Panc1 (cell line): ENCODE measurements at regions of chr10 and their contacts with region 1.

Region 1: DNA sequence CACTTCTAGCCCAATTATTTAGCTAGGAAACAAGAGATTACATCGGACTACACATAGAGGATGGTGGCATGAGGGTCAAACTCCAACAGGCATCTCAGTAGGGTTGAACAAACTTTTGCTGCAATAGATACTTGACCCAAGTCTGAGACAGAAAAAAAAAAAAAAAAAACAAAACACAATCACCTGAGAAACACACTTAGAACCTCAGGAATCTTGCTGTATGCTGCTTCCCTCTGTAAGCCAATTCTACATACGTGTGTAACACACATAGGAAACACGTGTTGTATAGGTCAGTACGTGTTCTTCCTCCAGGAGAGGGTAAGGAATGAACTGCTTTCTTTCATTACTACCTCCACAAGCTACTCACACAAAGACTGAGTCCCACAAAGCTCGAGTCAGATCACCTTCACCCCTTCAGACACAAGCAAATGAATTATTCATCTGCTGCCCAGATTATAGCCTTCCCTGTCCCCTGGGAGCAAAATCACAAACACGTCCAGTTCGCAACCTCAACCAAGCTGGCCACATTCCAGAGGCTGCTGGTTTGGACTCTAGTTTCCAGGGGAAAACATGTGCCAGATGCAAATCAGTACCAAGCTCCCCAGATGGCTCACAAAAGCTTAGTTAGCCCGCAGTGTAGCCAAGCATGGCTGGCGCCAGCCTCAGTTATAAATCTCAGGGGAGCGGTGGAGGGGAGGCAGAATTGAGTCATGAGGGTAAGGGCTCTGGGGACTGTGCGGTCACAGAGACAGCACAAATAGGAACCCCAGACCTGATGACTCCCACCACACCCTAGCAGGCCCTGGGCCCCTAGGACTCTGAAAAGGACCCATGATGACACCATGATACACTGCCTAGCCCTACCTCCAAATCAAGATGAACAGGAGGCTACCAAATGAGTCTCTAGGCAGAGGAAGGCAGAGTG is 15.1 kb downstream of the PSAP start:
- DNase-seq: no peak
- ATAC-seq: peak; percentile 1; the same call in 1 of the 2 replicates
- H3K4me3 ChIP-seq: peak overlapping the region in 1 of 2 experiments; percentile 2; a peak in 1 of 4 replicates
- H3K27ac ChIP-seq: peak overlapping the region; percentile 92
- H3K4me1 ChIP-seq: peaks cover 82% of the 10 kb centered on the region
- H3K27me3 ChIP-seq: no peaks in the 10 kb centered on the region
- CTCF ChIP-seq: no peak

Region 2: GRCh38 chr10:71812016-71812912 is 23.7 kb before region 1 on chr10:
- CTCF ChIA-PET with region 1: interaction called, 10 read pairs
- POLR2A ChIA-PET with region 1: no interaction called
- in situ Hi-C with region 1: no loop called
- intact Hi-C with region 1: no loop called
- DNase-seq: no peak
- ATAC-seq: peak; percentile 72
- H3K4me3 ChIP-seq: no peak overlapping the region
- H3K27ac ChIP-seq: peak overlapping the region; percentile 14; the same call in 1 of the 2 replicates
- H3K4me1 ChIP-seq: peaks cover 49% of the 10 kb centered on the region
- H3K27me3 ChIP-seq: no peaks in the 10 kb centered on the region
- CTCF ChIP-seq: peak; percentile 91; the same call in 1 of the 2 replicates

Region 3: GRCh38 chr10:71850637-71851464 is 14.9 kb after region 1 on chr10 and contains the start of gene PSAP:
- CTCF ChIA-PET with region 1: interaction called, 4 read pairs
- POLR2A ChIA-PET with region 1: interaction called, 33 read pairs
- in situ Hi-C with region 1: no loop called
- intact Hi-C with region 1: no loop called
- DNase-seq: peak; percentile 95
- ATAC-seq: peak; percentile 95
- H3K4me3 ChIP-seq: peak within 1 kb of the TSS; percentile 78 to 86
- H3K27ac ChIP-seq: peak within 1 kb of the TSS; percentile 96
- H3K4me1 ChIP-seq: peaks cover 39% of the 10 kb centered on the region
- H3K27me3 ChIP-seq: no peaks in the 10 kb centered on the region
- CTCF ChIP-seq: no peak
- total RNA-seq, gene PSAP: 3,649 TPM

Region 4: GRCh38 chr10:71860243-71861029 is 24.5 kb after region 1 on chr10:
- CTCF ChIA-PET with region 1: interaction called, 3 read pairs
- POLR2A ChIA-PET with region 1: interaction called, 17 read pairs
- in situ Hi-C with region 1: no loop called
- intact Hi-C with region 1: no loop called
- DNase-seq: peak; percentile 97
- ATAC-seq: peak; percentile 97
- H3K4me3 ChIP-seq: peak overlapping the region in 1 of 2 experiments; percentile 24; a peak in 2 of 4 replicates
- H3K27ac ChIP-seq: peak overlapping the region; percentile 98
- H3K4me1 ChIP-seq: peaks cover 60% of the 10 kb centered on the region
- H3K27me3 ChIP-seq: no peaks in the 10 kb centered on the region
- CTCF ChIP-seq: no peak

Region 5: GRCh38 chr10:71899665-71900412 is 63.9 kb after region 1 on chr10:
- CTCF ChIA-PET with region 1: interaction called, 49 read pairs
- POLR2A ChIA-PET with region 1: no interaction called
- in situ Hi-C with region 1: no loop called
- intact Hi-C with region 1: loop called (anchors 5 kb)
- DNase-seq: no peak
- ATAC-seq: no peak
- H3K4me3 ChIP-seq: no peak overlapping the region
- H3K27ac ChIP-seq: peak overlapping the region; percentile 25
- H3K4me1 ChIP-seq: peaks cover 10% of the 10 kb centered on the region
- H3K27me3 ChIP-seq: no peaks in the 10 kb centered on the region
- CTCF ChIP-seq: no peak

Region 6: DNA sequence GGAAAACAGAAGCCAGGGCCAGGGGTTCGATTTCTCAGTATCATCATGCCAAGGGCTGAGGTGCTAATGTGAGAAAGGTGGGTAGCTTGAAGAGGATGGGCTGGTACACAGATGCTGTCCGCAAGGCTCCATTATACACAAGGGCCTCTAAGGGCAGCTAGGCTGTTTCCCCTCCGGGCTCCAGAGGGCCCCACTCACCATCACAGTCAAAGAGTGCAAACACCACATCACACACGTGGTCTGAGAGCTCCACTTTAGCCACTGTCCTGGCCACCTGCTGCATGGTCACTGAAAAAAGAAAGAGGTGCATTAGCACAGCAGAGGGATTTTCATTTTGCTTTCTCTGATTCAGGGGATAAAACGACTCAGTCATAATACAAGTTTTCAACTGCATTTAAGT is 539.7 kb after region 1 on chr10:
- CTCF ChIA-PET with region 1: interaction called, 11 read pairs
- POLR2A ChIA-PET with region 1: no interaction called
- in situ Hi-C with region 1: no loop called
- intact Hi-C with region 1: no loop called
- DNase-seq: no peak
- ATAC-seq: peak; percentile 92
- H3K4me3 ChIP-seq: no peak overlapping the region
- H3K27ac ChIP-seq: no peak overlapping the region
- H3K4me1 ChIP-seq: no peaks in the 10 kb centered on the region
- H3K27me3 ChIP-seq: no peaks in the 10 kb centered on the region
- CTCF ChIP-seq: peak; percentile 64